ENCODE measurements at regions of chr20 and their contacts with region 1.

Region 1: DNA sequence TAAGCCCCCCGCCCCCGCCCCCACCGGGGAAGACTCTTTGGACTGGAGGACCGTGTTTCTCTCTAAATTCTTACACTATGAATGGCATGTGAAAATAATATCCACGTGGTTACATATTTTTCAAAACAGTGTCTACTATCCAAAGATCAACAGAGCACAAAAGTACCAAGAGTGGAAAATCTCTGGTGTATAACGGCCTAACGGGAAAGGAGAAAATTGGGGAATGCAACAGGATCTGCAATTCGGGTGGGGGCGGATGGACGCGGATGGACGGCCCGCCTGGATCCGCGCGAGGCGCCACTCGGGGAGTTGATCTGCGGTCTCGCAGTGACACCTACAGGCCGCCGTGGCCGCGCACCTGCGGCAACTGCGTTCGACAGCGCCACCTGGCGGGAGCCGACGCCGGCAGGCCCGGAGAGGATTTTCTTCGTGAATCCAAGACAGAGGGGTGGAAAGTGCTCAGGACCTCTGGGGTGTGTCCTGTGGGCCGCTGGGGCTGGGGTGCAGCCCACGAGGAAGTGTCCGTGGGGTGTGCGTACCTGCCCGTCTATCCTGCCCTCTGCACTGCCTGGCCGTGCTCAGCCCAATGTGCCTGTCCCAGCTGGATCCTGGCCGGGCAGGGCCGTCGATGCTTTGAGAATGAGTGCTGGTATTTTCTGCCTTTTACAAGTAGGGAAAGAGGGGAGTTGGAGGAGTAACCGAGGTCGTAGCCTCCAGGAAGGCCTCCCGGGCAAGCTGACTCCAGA is 18.6 kb downstream of the ANKRD60 start:
- DNase-seq: peak; percentile 73 to 98 (median 84)
- ATAC-seq: peak; percentile 97
- H3K4me3 ChIP-seq: no peak overlapping the region
- H3K27ac ChIP-seq: no peak overlapping the region
- H3K4me1 ChIP-seq: no peaks in the 10 kb centered on the region
- H3K27me3 ChIP-seq: peaks cover 0 to 18% of the 10 kb centered on the region in 2 donors
- CTCF ChIP-seq: peak; percentile 99 to 100

Region 2: DNA sequence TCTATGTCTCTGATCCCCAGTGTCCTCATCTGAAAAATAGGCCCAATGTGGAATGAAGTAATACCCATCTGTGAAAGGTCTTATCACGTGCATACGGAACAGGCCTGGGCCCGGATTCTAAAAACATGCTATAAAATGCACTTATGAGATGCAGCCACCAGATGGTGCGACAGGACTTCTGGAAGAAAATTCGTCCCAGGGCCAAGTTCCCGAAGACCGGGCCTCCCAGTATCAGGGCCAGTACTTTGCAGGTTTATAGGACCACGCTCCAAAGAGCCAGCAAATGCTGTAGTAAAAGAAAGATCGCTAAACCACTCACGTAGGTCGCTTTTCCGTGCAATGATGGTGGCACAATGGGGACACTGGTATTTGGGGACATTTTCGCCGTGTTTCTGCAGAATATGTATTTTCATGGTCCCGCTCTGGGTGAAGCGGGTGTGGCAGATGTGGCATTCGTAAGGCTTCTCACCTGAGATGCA is 695.5 kb before region 1 on chr20:
- intact Hi-C with region 1: loop called in 1 of 2 experiments (anchors 10 kb)
- DNase-seq: peak in 3 of 4 donors; percentile 53 to 81 (median 56)
- ATAC-seq: peak; percentile 82
- H3K4me3 ChIP-seq: no peak overlapping the region
- H3K27ac ChIP-seq: no peak overlapping the region
- H3K4me1 ChIP-seq: peaks cover 0 to 7% of the 10 kb centered on the region in 2 donors
- H3K27me3 ChIP-seq: peaks cover 0 to 12% of the 10 kb centered on the region in 2 donors
- CTCF ChIP-seq: peak; percentile 59 to 79

Region 3: GRCh38 chr20:58342104-58342960 is 132.5 kb after region 1 on chr20:
- intact Hi-C with region 1: no loop called
- DNase-seq: no peak
- ATAC-seq: peak; percentile 23
- H3K4me3 ChIP-seq: no peak overlapping the region
- H3K27ac ChIP-seq: no peak overlapping the region
- H3K4me1 ChIP-seq: peaks cover 0 to 3% of the 10 kb centered on the region in 2 donors
- H3K27me3 ChIP-seq: no peaks in the 10 kb centered on the region
- CTCF ChIP-seq: no peak

Region 4: DNA sequence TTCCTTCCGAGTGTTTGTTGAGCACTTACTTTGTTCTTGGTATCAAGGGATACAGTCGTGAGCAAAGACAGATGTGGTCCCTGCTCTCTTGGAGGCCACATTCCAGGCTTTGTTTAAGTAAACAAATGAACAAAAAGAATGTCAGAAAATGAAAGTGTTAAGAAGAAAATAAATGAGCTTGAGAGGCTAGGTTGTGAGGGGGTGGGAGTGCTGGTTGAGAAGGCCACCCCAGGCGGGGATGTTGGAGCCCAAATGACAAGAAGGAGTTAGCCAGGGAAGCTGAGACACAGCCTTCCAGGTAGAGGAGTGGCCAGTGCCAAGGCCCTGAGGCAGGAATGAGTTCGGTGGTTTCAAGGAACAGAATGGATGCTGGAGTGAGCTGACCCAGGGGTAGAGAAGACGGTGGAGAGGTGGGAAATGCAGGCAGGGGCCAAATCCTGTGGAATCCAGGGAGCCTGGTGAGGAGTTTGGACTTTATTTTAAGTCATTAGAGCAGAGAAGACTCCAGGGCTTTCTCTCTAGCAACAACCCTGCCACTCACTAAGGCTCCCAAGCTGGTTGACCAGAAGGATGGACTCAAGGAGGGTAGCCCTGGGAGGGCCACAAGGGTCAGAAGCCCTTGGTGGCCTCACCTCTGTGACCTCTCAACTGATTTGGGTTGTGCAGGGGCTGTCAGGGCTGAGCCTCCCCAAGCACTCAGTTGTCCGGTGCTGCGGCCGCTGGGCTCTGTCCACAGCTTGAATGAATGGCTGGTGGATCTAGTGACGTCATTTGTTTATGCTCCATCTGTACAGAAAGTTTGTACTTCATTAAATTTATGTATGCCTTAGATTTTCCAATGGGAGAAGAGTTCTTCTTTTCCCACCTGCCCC is 375.3 kb after region 1 on chr20:
- intact Hi-C with region 1: no loop called
- DNase-seq: no peak
- ATAC-seq: no peak
- H3K4me3 ChIP-seq: no peak overlapping the region
- H3K27ac ChIP-seq: no peak overlapping the region
- H3K4me1 ChIP-seq: no peaks in the 10 kb centered on the region
- H3K27me3 ChIP-seq: peaks cover 0 to 15% of the 10 kb centered on the region in 2 donors
- CTCF ChIP-seq: no peak

Measured in left lung (tissue), 14 donors.